CD8-positive, alpha-beta T cell (primary cell): ENCODE measurements at regions of chr7 and their contacts with region 1.

Region 1: DNA sequence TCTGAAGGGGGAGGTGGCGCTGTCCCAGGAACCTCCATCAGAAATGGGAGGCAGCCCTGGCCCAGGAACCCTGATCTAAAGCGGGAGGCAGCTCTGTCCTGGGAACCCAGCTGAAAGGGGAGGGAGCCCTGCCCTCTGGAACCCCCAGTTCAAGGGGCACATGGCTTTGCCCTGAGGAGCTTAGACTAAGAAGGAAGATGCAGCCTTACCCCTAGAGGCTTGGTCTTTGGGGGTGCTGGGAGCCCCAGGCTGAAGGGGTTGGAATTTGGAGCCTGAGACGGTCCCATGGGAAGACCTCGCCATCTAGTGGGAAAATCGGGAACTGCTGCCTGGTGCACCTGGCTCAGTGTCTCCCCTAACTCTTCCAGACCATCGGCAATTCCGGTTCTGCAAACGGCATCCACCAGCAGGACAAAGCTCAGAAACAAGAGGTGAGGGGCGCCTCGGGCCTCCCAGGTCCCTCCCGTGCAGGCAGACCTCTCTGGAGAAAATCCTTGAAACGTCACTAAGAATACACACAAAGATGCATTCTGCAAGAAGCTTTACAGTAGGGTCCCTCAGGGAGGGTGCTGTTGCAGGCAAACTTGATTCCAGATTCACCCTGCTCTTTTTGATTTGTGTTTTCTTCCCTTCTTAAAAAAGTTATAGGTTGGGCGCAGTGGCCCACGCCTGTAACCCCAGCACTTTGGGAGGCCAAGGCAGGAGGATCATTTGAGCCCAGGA is 52.4 kb upstream of the GTF2IRD1 start:
- DNase-seq: peak; percentile 46 to 84 (median 76)
- ATAC-seq: peak; percentile 73
- H3K4me3 ChIP-seq: no peak overlapping the region
- H3K4me3 Mint-ChIP-seq: no peak overlapping the region
- H3K27ac ChIP-seq: no peak overlapping the region
- H3K27ac Mint-ChIP-seq: no peak overlapping the region
- H3K4me1 ChIP-seq: no peaks in the 10 kb centered on the region
- H3K4me1 Mint-ChIP-seq: no peaks in the 10 kb centered on the region
- H3K27me3 ChIP-seq: no peaks in the 10 kb centered on the region
- H3K27me3 Mint-ChIP-seq: no peaks in the 10 kb centered on the region
- CTCF ChIP-seq: peak; percentile 88

Region 2: GRCh38 chr7:74061840-74062539 is 339.3 kb before region 1 on chr7:
- CTCF ChIA-PET with region 1: interaction called, 74 read pairs
- POLR2A ChIA-PET with region 1: no interaction called
- intact Hi-C with region 1: no loop called
- DNase-seq: peak; percentile 53 to 90 (median 71)
- ATAC-seq: peak; percentile 98
- H3K4me3 ChIP-seq: no peak overlapping the region
- H3K4me3 Mint-ChIP-seq: peak overlapping the region; percentile 5
- H3K27ac ChIP-seq: peak overlapping the region; percentile 52 to 61
- H3K27ac Mint-ChIP-seq: peak overlapping the region; percentile 41
- H3K4me1 ChIP-seq: no peaks in the 10 kb centered on the region
- H3K4me1 Mint-ChIP-seq: peaks cover 4% of the 10 kb centered on the region
- H3K27me3 ChIP-seq: no peaks in the 10 kb centered on the region
- H3K27me3 Mint-ChIP-seq: peaks cover 7% of the 10 kb centered on the region
- CTCF ChIP-seq: no peak

Region 3: DNA sequence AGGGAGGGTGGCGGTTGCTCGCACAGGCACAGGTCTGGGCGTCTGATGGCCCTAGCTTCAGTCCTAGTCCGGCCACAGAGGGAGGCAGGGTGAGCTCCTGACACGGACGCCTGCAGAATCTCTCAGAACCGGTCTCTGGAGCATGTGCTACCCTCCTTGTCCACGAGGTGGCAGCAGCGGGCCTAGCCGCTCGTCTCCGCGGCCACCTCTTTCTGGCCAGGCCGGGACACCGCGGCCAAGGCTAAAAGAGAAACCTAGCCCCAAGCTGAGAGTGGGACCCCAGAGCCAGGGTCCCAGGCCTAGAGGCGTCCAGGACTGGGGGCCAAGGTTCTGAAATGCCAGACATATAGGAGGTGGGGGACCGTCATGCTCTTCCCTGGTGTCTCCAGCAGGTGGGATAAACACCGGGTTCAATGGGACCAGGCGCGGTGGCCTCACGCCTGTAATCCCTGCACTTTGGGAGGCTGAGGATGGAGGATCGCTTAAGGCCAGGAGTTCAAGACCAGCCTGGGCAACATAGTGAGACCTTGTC is 194.6 kb before region 1 on chr7:
- CTCF ChIA-PET with region 1: interaction called, 147 read pairs
- POLR2A ChIA-PET with region 1: no interaction called
- intact Hi-C with region 1: loop called in 1 of 2 experiments (anchors 1 kb)
- DNase-seq: peak; percentile 57 to 89 (median 79)
- ATAC-seq: peak; percentile 86
- H3K4me3 ChIP-seq: peak overlapping the region; percentile 42 to 54
- H3K4me3 Mint-ChIP-seq: no peak overlapping the region
- H3K27ac ChIP-seq: no peak overlapping the region
- H3K27ac Mint-ChIP-seq: no peak overlapping the region
- H3K4me1 ChIP-seq: peaks cover 20% of the 10 kb centered on the region
- H3K4me1 Mint-ChIP-seq: peaks cover 22% of the 10 kb centered on the region
- H3K27me3 ChIP-seq: no peaks in the 10 kb centered on the region
- H3K27me3 Mint-ChIP-seq: peaks cover 3% of the 10 kb centered on the region
- CTCF ChIP-seq: peak; percentile 99

Region 4: GRCh38 chr7:74275401-74275881 is 125.9 kb before region 1 on chr7:
- CTCF ChIA-PET with region 1: interaction called, 7 read pairs
- POLR2A ChIA-PET with region 1: no interaction called
- intact Hi-C with region 1: loop called in 1 of 2 experiments (anchors 2 kb)
- DNase-seq: peak in 1 of 9 experiments; percentile 22
- ATAC-seq: no peak
- H3K4me3 ChIP-seq: no peak overlapping the region
- H3K4me3 Mint-ChIP-seq: no peak overlapping the region
- H3K27ac ChIP-seq: no peak overlapping the region
- H3K27ac Mint-ChIP-seq: no peak overlapping the region
- H3K4me1 ChIP-seq: no peaks in the 10 kb centered on the region
- H3K4me1 Mint-ChIP-seq: peaks cover 2% of the 10 kb centered on the region
- H3K27me3 ChIP-seq: no peaks in the 10 kb centered on the region
- H3K27me3 Mint-ChIP-seq: no peaks in the 10 kb centered on the region
- CTCF ChIP-seq: peak; percentile 50

Region 5: DNA sequence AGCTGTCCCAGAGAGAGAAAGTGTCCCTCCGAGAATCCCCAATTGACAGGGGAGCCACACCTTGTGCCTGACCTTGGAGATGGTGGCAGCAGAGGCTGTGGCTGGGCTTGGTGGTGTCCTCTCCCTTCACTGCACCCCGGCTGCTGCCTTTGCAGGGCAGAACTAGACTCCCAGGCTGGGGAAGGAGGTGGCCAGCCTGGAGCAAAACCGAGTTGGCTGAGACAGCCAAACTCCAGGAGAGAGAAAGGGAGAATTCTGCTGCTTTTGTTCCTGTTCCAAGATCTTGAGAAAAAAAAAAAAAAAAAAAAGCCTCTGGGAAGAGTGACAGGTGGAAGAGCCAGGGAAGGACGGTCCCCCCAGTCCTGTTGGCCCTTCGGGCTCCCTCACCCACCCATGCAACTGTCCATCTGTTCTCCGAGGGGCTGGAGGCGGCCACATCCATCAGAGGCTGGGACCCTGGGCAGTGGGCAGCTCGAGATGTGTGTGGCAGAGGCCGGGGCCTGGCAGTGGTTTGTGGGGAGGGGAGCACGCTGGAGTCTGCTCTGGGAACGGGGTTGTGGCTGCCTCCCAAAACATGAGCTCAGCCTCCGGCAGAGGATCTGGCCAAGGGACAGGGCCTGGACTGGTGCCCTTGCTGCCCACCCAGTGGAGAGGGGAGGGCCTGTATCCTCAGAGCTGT is 76.6 kb before region 1 on chr7:
- CTCF ChIA-PET with region 1: no interaction called
- POLR2A ChIA-PET with region 1: no interaction called
- intact Hi-C with region 1: no loop called
- DNase-seq: no peak
- ATAC-seq: no peak
- H3K4me3 ChIP-seq: no peak overlapping the region
- H3K4me3 Mint-ChIP-seq: no peak overlapping the region
- H3K27ac ChIP-seq: no peak overlapping the region
- H3K27ac Mint-ChIP-seq: no peak overlapping the region
- H3K4me1 ChIP-seq: no peaks in the 10 kb centered on the region
- H3K4me1 Mint-ChIP-seq: no peaks in the 10 kb centered on the region
- H3K27me3 ChIP-seq: no peaks in the 10 kb centered on the region
- H3K27me3 Mint-ChIP-seq: no peaks in the 10 kb centered on the region
- CTCF ChIP-seq: no peak

Region 6: GRCh38 chr7:74388880-74389415 is 12.3 kb before region 1 on chr7:
- CTCF ChIA-PET with region 1: interaction called, 50 read pairs
- POLR2A ChIA-PET with region 1: no interaction called
- intact Hi-C with region 1: no loop called
- DNase-seq: no peak
- ATAC-seq: no peak
- H3K4me3 ChIP-seq: no peak overlapping the region
- H3K4me3 Mint-ChIP-seq: no peak overlapping the region
- H3K27ac ChIP-seq: no peak overlapping the region
- H3K27ac Mint-ChIP-seq: no peak overlapping the region
- H3K4me1 ChIP-seq: no peaks in the 10 kb centered on the region
- H3K4me1 Mint-ChIP-seq: no peaks in the 10 kb centered on the region
- H3K27me3 ChIP-seq: no peaks in the 10 kb centered on the region
- H3K27me3 Mint-ChIP-seq: no peaks in the 10 kb centered on the region
- CTCF ChIP-seq: no peak

Region 7: DNA sequence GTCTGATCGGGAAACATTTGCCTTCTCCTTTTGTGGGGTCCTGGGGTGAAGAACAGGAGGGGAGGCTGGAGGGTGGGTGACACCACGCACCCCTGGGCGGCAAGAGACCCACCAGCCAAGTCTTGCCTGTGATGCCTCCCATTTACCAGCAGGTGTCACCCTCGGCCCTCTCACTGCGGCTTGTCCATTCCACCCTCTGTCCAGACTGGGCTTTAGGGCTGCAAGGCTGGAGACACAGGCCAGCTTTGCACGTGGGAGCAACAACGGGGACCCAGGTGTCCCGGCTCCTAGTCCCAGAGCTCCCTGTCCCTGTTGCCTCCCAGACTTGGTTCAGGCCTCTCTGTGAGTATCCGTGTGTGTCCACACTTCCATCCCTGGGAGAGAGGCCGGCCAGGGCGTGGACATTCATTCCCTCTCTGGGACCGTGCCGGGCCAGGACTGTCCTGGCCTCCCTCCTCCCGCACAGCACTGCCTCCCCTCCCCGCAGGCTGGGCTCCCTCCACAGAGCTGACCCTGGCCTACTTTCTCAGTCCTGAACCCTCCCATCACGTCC is 16.2 kb after region 1 on chr7:
- CTCF ChIA-PET with region 1: interaction called, 16 read pairs
- POLR2A ChIA-PET with region 1: no interaction called
- intact Hi-C with region 1: no loop called
- DNase-seq: peak in 8 of 9 experiments; percentile 39 to 74 (median 60)
- ATAC-seq: peak; percentile 66
- H3K4me3 ChIP-seq: no peak overlapping the region
- H3K4me3 Mint-ChIP-seq: no peak overlapping the region
- H3K27ac ChIP-seq: no peak overlapping the region
- H3K27ac Mint-ChIP-seq: no peak overlapping the region
- H3K4me1 ChIP-seq: no peaks in the 10 kb centered on the region
- H3K4me1 Mint-ChIP-seq: no peaks in the 10 kb centered on the region
- H3K27me3 ChIP-seq: no peaks in the 10 kb centered on the region
- H3K27me3 Mint-ChIP-seq: no peaks in the 10 kb centered on the region
- CTCF ChIP-seq: peak; percentile 97